ENCODE measurements at regions of chr5 and their contacts with region 1.

Region 1: DNA sequence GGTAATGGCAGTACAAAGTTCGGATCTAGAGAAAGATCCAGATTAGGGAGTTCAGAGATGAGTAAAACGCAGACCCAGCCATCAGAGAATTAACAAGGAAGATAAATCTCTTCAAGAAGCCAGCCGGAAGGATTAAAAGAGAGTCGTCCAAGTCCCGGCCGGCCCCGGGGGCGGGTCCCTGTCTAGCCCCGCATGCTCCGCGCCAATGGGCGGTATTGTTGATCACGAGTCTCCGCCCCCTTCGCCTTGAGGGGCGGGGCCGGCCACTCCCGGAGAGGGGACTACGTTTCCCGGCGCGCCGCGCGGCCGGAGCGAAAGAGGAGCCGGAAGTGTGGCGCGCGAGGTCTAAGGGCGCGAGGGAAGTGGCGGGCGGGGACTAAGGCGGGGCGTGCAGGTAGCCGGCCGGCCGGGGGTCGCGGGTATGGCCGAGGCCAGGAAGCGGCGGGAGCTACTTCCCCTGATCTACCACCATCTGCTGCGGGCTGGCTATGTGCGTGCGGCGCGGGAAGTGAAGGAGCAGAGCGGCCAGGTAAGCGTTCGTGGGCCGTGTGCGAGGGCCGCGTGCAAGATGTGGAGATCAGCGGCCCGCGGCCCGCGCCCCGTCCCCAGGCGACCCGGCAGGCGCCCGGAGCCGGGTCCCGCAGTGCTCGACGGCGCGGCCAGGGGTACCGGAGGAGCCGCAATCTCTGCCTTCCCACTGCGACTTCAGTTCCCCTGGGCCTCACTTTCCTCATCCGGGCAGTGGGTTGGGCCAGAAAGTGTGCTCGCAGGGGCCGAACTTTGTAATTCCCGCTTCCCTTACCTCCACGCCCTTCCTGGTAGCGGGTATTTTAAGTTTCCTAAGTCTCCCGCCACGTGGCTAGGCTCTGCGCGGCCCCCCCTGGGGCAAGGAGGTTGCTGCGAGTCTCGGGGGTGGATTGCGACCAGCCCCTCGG is at the start of gene TCOF1:
- DNase-seq: peak; percentile 92 to 98
- H3K4me3 ChIP-seq: peak within 1 kb of the TSS; percentile 60 to 80
- H3K27ac ChIP-seq: peak within 1 kb of the TSS in 1 of 2 donors; percentile 9
- H3K4me1 ChIP-seq: peaks cover 0 to 3% of the 10 kb centered on the region in 2 donors
- H3K27me3 ChIP-seq: no peaks in the 10 kb centered on the region
- CTCF ChIP-seq: no peak
- total RNA-seq, gene TCOF1: 31.4 TPM

Region 2: GRCh38 chr5:150000256-150000989 is 357.2 kb before region 1 on chr5 and contains the starts of genes HMGXB3 and TIGD6:
- intact Hi-C with region 1: loop called (anchors 2 kb)
- DNase-seq: peak; percentile 73 to 95
- H3K4me3 ChIP-seq: peak within 1 kb of the TSS; percentile 79 to 98
- H3K27ac ChIP-seq: peak within 1 kb of the TSS; percentile 93 to 95
- H3K4me1 ChIP-seq: peaks cover 8 to 24% of the 10 kb centered on the region in 2 donors
- H3K27me3 ChIP-seq: no peaks in the 10 kb centered on the region
- CTCF ChIP-seq: no peak
- total RNA-seq, gene HMGXB3: 56.4 TPM
- total RNA-seq, gene TIGD6: 4.2 TPM

Region 3: GRCh38 chr5:150286890-150287219 is 70.7 kb before region 1 on chr5:
- intact Hi-C with region 1: no loop called
- DNase-seq: no peak
- H3K4me3 ChIP-seq: no peak overlapping the region
- H3K27ac ChIP-seq: no peak overlapping the region
- H3K4me1 ChIP-seq: no peaks in the 10 kb centered on the region
- H3K27me3 ChIP-seq: no peaks in the 10 kb centered on the region
- CTCF ChIP-seq: no peak

Region 4: GRCh38 chr5:150309227-150309885 is 48.2 kb before region 1 on chr5:
- intact Hi-C with region 1: no loop called
- DNase-seq: no peak
- H3K4me3 ChIP-seq: no peak overlapping the region
- H3K27ac ChIP-seq: no peak overlapping the region
- H3K4me1 ChIP-seq: no peaks in the 10 kb centered on the region
- H3K27me3 ChIP-seq: no peaks in the 10 kb centered on the region
- CTCF ChIP-seq: no peak

Region 5: DNA sequence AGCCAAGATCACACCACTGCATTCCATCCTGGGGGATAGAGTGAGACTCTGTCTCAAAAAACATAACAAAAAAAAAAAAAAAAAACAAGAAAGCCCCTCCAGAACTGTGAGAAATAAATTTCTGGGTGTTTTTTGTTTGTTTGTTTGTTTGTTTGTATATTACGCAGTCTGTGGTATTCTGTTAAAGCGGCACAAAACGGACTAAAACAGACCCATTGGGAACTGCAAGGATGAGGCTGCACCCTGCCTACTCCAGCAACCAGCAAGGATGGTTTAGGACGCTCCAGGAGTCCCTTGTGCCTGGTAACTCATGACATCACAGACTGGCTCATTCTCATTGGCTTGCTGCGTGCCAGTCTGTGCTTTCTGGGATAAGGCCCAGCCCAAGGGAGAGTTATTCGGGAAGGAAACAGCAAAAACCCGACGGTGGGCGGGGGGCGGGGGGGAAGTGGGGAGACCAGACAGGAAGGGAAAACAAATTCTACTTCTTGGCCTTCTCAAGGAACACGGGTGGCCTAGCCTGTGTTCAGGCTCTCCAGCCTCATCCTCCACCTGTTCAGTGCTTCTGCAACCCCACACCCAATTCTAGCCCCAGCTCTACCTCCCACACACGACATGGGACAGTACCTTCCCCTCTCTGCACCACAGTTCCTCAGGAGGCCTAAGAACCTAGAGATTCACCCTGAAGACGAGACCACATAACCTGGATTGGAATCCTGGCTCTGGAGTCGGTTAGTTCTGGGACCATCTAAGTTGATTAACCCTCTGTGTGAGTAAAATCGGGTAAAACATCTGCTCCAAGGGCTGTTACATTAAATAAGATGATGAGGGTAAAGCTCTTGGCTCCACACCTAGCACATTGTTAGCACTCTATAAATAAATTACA is 52.3 kb after region 1 on chr5:
- intact Hi-C with region 1: loop called (anchors 5 kb)
- DNase-seq: peak; percentile 61 to 92
- H3K4me3 ChIP-seq: peak overlapping the region; percentile 28 to 64
- H3K27ac ChIP-seq: peak overlapping the region; percentile 81 to 86
- H3K4me1 ChIP-seq: peaks cover 3 to 11% of the 10 kb centered on the region in 2 donors
- H3K27me3 ChIP-seq: no peaks in the 10 kb centered on the region
- CTCF ChIP-seq: no peak

Region 6: GRCh38 chr5:150436141-150436680 is 78.6 kb after region 1 on chr5:
- intact Hi-C with region 1: loop called (anchors 5 kb)
- DNase-seq: peak; percentile 40 to 95
- H3K4me3 ChIP-seq: peak overlapping the region in 1 of 2 donors; percentile 29
- H3K27ac ChIP-seq: no peak overlapping the region
- H3K4me1 ChIP-seq: peaks cover 0 to 3% of the 10 kb centered on the region in 2 donors
- H3K27me3 ChIP-seq: no peaks in the 10 kb centered on the region
- CTCF ChIP-seq: peak; percentile 72 to 89 (median 77)

Region 7: GRCh38 chr5:152305525-152305924 is 1947.9 kb after region 1 on chr5:
- intact Hi-C with region 1: no loop called
- DNase-seq: no peak
- H3K4me3 ChIP-seq: no peak overlapping the region
- H3K27ac ChIP-seq: no peak overlapping the region
- H3K4me1 ChIP-seq: no peaks in the 10 kb centered on the region
- H3K27me3 ChIP-seq: no peaks in the 10 kb centered on the region
- CTCF ChIP-seq: no peak